Posterior vena cava (tissue), 2 donors: ENCODE measurements at regions of chr11 and their contacts with region 1.

Region 1: DNA sequence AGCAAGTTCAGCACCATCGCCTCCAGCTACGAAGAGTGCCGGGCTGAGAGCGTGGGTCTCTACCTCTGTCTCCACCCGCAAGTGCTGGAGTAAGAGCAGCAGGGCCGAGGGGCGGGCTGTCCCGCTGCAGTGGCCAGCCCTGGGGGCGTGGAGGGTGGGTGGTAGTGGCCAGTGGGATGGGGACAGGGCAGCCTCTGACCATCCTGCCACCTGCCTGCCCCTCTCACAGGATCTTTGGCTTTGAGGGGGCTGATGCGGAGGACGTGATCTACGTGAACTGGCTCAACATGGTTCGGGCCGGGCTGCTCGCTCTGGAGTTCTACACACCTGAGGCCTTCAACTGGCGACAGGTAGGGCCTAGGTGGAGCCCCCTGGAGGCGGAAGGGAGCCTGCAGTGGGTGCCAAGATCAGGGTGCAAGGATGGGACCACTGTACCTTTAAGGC is 15.0 kb upstream of the BBS1 start:
- DNase-seq: no peak

Region 2: GRCh38 chr11:65868076-65868667 is 627.3 kb before region 1 on chr11:
- intact Hi-C with region 1: loop called in 1 of 2 experiments (anchors 5 kb)
- DNase-seq: no peak

Region 3: DNA sequence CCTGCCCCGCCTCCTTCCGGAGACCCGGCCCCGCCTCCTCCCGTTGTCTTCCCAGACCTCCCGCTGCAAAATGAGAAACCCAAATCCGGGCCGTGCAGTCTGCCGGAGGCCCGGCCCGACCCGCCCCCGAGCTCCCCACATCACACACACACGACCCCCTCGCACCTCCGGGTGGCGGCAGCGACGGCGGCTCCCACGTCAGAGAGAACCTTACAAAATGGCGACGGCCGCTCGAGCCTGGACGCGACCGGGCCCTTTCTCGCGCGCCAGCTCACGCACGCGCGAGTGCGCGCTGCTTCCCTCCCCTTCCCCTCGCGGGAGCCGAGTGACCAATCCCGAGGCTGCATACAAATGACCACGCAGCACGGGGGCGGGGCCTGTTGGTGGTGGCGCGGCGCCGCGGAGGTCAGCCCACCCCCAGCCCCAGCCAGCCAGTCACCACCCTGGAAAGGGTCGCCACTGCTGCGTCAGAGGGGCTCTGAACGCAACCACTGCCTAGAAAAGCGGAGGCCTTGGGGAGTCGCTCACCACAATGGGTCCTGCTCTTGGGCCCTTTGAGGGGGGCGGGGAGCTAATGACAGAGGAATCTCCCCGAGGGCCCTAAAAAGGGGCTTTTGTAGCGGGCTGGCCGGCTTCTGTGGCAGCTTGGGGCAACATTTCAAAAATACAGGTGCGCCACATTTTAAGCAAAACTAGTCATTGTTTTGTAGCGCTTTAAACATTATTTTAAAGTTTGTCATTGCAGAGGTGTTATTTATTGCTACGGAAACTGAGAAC is 182.4 kb after region 1 on chr11 and contains the start of gene RBM4B:
- intact Hi-C with region 1: no loop called
- DNase-seq: peak; percentile 99
- total RNA-seq, gene RBM4B: 9.0 to 10.2 TPM